ENCODE measurements at regions of chr7 and their contacts with region 1.

Region 1: GRCh38 chr7:39987476-39988347 is 37.7 kb downstream of the CDK13 start:
- DNase-seq: peak; percentile 30
- ATAC-seq: peak; percentile 72
- H3K4me3 Mint-ChIP-seq: peak overlapping the region; percentile 16
- H3K27ac Mint-ChIP-seq: peak overlapping the region; percentile 75
- H3K4me1 Mint-ChIP-seq: peaks cover 46% of the 10 kb centered on the region
- H3K27me3 Mint-ChIP-seq: no peaks in the 10 kb centered on the region
- CTCF ChIP-seq: no peak

Region 2: DNA sequence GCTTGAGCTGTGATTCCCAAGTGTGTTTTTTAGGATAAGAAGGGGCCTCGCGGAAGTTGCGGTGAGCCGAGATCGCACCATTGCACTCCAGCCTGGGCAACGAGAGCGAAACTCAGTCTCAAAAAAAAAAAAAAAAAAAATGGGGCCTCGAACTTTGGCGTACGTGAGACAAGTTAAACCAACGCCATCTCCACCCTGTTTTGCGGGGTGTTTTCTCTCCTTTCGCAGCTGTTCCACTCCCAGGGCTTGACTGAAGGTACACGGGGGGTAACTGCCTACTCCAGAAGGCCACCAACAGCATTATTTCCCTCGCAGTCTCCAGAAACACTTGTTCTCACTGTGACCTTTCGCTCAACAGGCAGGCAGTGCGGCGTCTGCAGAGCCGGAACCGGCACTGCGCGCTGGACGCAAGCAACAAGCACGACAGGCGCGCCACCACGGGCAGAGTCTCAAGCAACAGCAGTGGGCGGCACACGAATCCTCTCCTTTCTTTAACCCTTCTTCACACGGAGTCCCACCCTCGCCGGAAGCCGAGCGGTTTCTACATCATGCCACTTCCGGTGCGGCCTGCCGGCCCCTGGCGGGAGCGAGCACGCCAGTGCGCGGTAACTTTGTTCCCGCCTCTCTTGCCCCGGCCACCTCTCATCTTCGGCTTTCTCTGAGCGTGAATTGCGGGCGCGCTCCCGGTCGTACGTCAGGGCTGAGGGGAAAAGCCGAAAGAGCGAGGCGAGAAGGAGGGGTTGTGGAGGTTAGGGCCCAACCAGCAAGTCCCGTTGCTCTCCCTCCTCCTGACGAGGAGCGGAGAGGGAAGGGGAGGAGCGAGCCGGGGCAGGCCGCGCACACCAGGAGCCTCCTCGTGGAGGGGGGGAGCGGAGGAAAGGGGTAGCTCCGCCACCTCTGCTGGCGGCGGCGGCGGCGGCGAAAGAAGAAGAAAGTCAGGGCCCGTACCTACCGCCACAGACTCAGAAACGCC is 38.5 kb before region 1 on chr7:
- CTCF ChIA-PET with region 1: interaction called, 4 read pairs
- POLR2A ChIA-PET with region 1: interaction called, 3 read pairs
- intact Hi-C with region 1: loop called (anchors 5 kb)
- DNase-seq: peak; percentile 98
- ATAC-seq: peak; percentile 79
- H3K4me3 Mint-ChIP-seq: peak overlapping the region; percentile 90
- H3K27ac Mint-ChIP-seq: peak overlapping the region; percentile 99
- H3K4me1 Mint-ChIP-seq: peaks cover 20% of the 10 kb centered on the region
- H3K27me3 Mint-ChIP-seq: no peaks in the 10 kb centered on the region
- CTCF ChIP-seq: no peak

Measured in activated CD8-positive, alpha-beta T cell treated with anti-CD3 and anti-CD28 coated beads for 36 hours (primary cell).